Heart left ventricle (tissue), 16 donors: ENCODE measurements at regions of chr17 and their contacts with region 1.

Region 1: GRCh38 chr17:21043286-21044232 is 748 bp upstream of the USP22 start:
- DNase-seq: peak; percentile 99
- ATAC-seq: peak; percentile 93 to 98 (median 97)
- H3K4me3 ChIP-seq: peak overlapping the region; percentile 28 to 97 (median 71)
- H3K27ac ChIP-seq: peak overlapping the region; percentile 82 to 100 (median 96)
- H3K4me1 ChIP-seq: peaks cover 0 to 42% (median 29%) of the 10 kb centered on the region in 12 donors
- H3K27me3 ChIP-seq: no peaks in the 10 kb centered on the region
- CTCF ChIP-seq: peak; percentile 72 to 98 (median 90)
- POLR2A ChIP-seq: peak in 1 of 2 donors; percentile 77

Region 2: GRCh38 chr17:20908373-20909273 is 134.9 kb before region 1 on chr17:
- intact Hi-C with region 1: loop called in 3 of 10 experiments (anchors 1 to 5 kb)
- DNase-seq: peak; percentile 92 to 96 (median 93)
- ATAC-seq: peak; percentile 100
- H3K4me3 ChIP-seq: peak overlapping the region; percentile 9 to 63 (median 52)
- H3K27ac ChIP-seq: peak overlapping the region; percentile 75 to 93 (median 88)
- H3K4me1 ChIP-seq: peaks cover 0 to 13% (median 9%) of the 10 kb centered on the region in 12 donors
- H3K27me3 ChIP-seq: no peaks in the 10 kb centered on the region
- CTCF ChIP-seq: peak; percentile 48 to 84 (median 60)
- POLR2A ChIP-seq: peak in 1 of 2 donors; percentile 78

Region 3: GRCh38 chr17:21001813-21002221 is 41.7 kb before region 1 on chr17:
- intact Hi-C with region 1: loop called in 1 of 10 experiments (anchors 5 kb)
- DNase-seq: no peak
- ATAC-seq: peak in 1 of 4 donors; percentile 12
- H3K4me3 ChIP-seq: no peak overlapping the region
- H3K27ac ChIP-seq: peak overlapping the region in 4 of 12 donors; percentile 4 to 63 (median 28)
- H3K4me1 ChIP-seq: peaks cover 0 to 75% (median 44%) of the 10 kb centered on the region in 12 donors
- H3K27me3 ChIP-seq: no peaks in the 10 kb centered on the region
- CTCF ChIP-seq: no peak
- POLR2A ChIP-seq: no peak

Region 4: DNA sequence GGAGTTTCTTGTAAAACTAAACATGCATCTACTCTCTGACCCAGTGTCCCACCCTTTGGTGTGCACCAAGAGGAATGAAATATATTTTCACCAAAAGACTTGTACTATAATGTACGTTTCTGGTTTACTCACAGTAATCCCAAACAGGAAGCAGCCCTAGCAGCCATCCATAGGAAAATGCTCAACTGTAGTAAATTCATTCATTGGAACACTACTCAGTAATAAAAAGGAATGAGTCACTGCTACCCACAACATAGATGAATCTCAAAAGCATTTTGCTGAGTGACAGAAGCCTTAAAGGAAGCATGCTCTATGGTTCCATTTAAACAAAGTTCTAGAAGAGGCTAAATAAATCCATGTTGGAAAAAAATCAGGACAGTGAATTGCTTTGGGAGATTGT is 45.6 kb after region 1 on chr17:
- intact Hi-C with region 1: no loop called
- DNase-seq: no peak
- ATAC-seq: no peak
- H3K4me3 ChIP-seq: no peak overlapping the region
- H3K27ac ChIP-seq: no peak overlapping the region
- H3K4me1 ChIP-seq: peaks cover 0 to 9% (median 0%) of the 10 kb centered on the region in 12 donors
- H3K27me3 ChIP-seq: no peaks in the 10 kb centered on the region
- CTCF ChIP-seq: no peak
- POLR2A ChIP-seq: no peak

Region 5: DNA sequence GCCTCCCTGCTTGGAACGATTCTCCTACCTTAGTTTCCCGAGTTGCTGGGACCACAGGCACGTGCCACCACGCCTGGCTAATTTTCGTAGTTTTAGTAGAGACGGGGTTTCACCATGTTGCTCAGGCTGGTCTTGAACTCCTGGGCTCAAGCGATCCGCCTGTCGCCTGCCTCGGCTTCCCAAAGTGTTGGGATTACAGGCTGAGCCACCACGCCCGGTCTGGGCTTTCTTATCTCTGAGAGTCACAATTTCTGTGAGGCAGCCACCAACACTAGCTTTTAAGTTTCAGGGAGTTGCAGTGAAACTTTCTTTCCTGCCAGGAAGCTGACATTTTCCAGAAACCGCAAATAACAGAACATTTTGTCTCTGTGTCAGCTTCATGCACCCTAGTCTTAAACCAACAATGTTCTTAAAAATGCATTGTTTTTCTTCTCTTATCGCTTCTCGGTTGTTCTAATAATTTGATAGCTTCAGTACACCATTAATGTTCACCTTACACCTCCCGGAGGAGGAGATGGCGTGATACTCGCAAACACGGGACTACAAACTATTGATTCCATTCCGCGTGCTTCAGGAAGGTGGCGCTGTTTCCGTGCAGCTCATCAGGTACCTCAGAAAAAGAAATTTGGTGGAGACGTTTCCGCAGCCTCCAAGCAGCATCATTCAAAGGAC is 75.8 kb after region 1 on chr17:
- intact Hi-C with region 1: loop called in 1 of 10 experiments (anchors 2 kb)
- DNase-seq: peak; percentile 67 to 75 (median 70)
- ATAC-seq: peak; percentile 47 to 86 (median 79)
- H3K4me3 ChIP-seq: peak overlapping the region in 4 of 12 donors; percentile 8 to 31 (median 17)
- H3K27ac ChIP-seq: peak overlapping the region in 2 of 12 donors; percentile 58 to 68
- H3K4me1 ChIP-seq: peaks cover 0 to 19% (median 4%) of the 10 kb centered on the region in 12 donors
- H3K27me3 ChIP-seq: no peaks in the 10 kb centered on the region
- CTCF ChIP-seq: peak; percentile 73 to 88 (median 78)
- POLR2A ChIP-seq: no peak

Region 6: GRCh38 chr17:21284319-21285163 is 241.0 kb after region 1 on chr17 and contains the start of gene MAP2K3:
- intact Hi-C with region 1: loop called in 3 of 10 experiments (anchors 2 to 10 kb)
- DNase-seq: peak; percentile 99 to 100 (median 100)
- ATAC-seq: peak; percentile 79 to 89 (median 86)
- H3K4me3 ChIP-seq: peak within 1 kb of the TSS; percentile 49 to 99 (median 92)
- H3K27ac ChIP-seq: peak within 1 kb of the TSS; percentile 83 to 99 (median 94)
- H3K4me1 ChIP-seq: peaks cover 16 to 72% (median 50%) of the 10 kb centered on the region in 12 donors
- H3K27me3 ChIP-seq: no peaks in the 10 kb centered on the region
- CTCF ChIP-seq: peak in 1 of 12 donors; percentile 12
- POLR2A ChIP-seq: peak; percentile 90 to 99
- total RNA-seq, gene MAP2K3: 29.4 to 170 (median 54.4) TPM